ENCODE measurements at regions of chr20 and their contacts with region 1.

Region 1: DNA sequence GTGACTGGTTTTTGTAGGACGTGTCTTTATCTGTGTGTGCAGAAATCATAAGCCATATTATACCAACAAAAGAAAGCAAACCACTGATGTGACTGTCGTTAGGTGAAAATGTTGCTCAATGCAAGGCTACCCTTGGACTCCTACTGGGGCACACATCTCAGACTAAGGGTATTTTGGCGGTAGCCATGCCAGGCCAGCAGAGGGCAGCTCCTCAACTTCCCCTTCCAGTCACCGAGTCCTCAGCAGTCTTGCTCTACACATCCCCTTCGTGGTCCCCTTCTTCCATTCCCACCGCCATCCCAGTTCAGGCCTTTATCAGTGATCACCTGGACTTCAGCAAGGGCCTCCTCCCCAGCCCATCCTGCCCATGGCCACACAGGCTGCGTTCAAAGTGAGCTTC is 113.7 kb upstream of the GGTLC1 start:
- DNase-seq: peak; percentile 65
- ATAC-seq: peak; percentile 96
- H3K4me3 Mint-ChIP-seq: no peak overlapping the region
- H3K27ac Mint-ChIP-seq: no peak overlapping the region
- H3K4me1 Mint-ChIP-seq: no peaks in the 10 kb centered on the region
- H3K27me3 Mint-ChIP-seq: no peaks in the 10 kb centered on the region; the same call in 1 of the 2 replicates
- CTCF ChIP-seq: peak; percentile 37; the same call in 1 of the 2 replicates

Region 2: DNA sequence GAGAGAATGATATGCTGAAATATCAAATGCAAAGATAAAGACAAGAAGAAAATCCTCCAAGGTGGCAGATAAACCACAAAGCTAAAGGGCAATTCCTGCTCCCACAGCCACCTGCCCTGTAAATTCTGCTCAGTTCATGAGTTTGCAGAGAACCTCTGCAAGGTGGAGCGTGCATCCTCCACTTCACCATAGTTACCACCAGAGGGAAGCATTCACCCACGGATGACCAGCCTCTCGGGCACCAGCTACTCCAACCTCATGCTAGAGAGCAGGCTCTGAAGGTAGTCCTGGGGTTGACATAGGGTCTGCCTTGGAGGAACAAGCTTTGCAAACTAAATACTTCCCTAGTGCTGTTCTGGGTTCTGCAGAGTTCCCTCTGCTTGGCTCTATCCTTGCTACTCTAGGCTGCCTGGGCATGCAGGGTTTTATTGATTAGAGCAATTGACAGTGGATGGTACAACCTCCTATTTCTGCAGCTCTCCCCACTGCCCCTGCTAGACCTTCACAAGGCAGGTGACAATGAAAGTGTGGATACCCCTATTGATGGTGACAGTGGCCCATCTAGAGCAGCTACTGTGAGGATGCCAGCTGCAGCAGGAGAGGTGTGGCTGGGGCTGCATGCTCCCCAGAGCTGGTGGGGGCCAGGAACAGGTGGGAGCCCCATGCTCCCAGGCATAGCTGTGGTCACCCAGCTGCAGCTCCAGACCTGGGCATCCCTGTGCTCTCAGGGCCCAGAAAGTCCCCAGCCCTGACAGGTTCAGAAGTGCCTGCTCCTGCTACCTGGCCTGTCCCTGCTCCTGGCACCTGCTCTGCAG is 164.8 kb before region 1 on chr20:
- CTCF ChIA-PET with region 1: interaction called, 12 read pairs
- POLR2A ChIA-PET with region 1: no interaction called
- DNase-seq: peak; percentile 75
- ATAC-seq: peak; percentile 99
- H3K4me3 Mint-ChIP-seq: no peak overlapping the region
- H3K27ac Mint-ChIP-seq: no peak overlapping the region
- H3K4me1 Mint-ChIP-seq: no peaks in the 10 kb centered on the region
- H3K27me3 Mint-ChIP-seq: no peaks in the 10 kb centered on the region
- CTCF ChIP-seq: peak; percentile 71

Region 3: GRCh38 chr20:23954008-23954745 is 148.1 kb before region 1 on chr20:
- CTCF ChIA-PET with region 1: no interaction called
- POLR2A ChIA-PET with region 1: no interaction called
- DNase-seq: no peak
- ATAC-seq: no peak
- H3K4me3 Mint-ChIP-seq: no peak overlapping the region
- H3K27ac Mint-ChIP-seq: no peak overlapping the region
- H3K4me1 Mint-ChIP-seq: peaks cover 31% of the 10 kb centered on the region
- H3K27me3 Mint-ChIP-seq: no peaks in the 10 kb centered on the region
- CTCF ChIP-seq: no peak

Region 4: DNA sequence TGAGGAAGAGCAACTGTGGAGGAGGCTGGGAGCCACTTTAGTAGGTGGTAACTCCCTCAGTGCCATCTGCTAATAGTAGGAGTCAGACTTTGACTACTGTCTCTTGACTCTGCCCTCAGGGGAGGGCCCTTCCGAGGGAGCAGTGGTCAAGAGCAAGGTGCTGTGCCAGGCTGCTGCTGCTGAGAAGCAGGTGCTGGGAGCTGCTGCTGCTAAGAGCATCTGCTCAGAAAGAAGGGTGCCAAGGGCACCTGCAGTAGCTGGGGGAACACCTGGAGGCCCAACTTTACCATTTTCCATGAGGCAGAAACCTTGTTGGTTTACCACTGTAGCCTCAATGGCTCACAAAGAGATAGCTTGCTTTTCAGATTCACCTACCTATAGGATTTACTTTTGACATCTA is 132.2 kb before region 1 on chr20:
- CTCF ChIA-PET with region 1: no interaction called
- POLR2A ChIA-PET with region 1: no interaction called
- DNase-seq: no peak
- ATAC-seq: no peak
- H3K4me3 Mint-ChIP-seq: no peak overlapping the region
- H3K27ac Mint-ChIP-seq: no peak overlapping the region
- H3K4me1 Mint-ChIP-seq: peaks cover 21% of the 10 kb centered on the region
- H3K27me3 Mint-ChIP-seq: peaks cover 19% of the 10 kb centered on the region
- CTCF ChIP-seq: no peak

Region 5: GRCh38 chr20:24063100-24063499 is 39.2 kb before region 1 on chr20:
- CTCF ChIA-PET with region 1: no interaction called
- POLR2A ChIA-PET with region 1: no interaction called
- DNase-seq: no peak
- ATAC-seq: no peak
- H3K4me3 Mint-ChIP-seq: no peak overlapping the region
- H3K27ac Mint-ChIP-seq: no peak overlapping the region
- H3K4me1 Mint-ChIP-seq: peaks cover 21% of the 10 kb centered on the region
- H3K27me3 Mint-ChIP-seq: no peaks in the 10 kb centered on the region
- CTCF ChIP-seq: no peak

Region 6: DNA sequence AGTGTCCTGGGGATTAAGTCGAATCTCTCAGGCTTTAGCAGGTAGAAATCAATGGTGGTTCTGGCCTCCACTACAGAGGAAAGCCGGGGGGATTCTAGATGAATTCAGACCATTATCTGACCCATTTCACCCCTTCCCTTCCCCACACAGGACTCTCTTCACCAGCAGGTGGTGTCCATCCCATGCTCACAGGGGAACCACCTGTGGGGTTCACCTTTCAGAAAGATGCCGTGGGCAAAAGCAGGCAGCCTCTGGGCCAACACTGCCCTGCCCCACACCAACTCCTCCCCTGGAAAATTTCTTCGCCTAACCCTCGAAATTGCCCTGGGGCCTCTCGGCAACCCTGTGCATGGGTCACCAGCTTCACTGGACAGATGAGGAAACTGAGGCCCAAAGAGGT is 10.1 kb after region 1 on chr20:
- CTCF ChIA-PET with region 1: interaction called, 11 read pairs
- POLR2A ChIA-PET with region 1: no interaction called
- DNase-seq: no peak
- ATAC-seq: no peak
- H3K4me3 Mint-ChIP-seq: no peak overlapping the region
- H3K27ac Mint-ChIP-seq: no peak overlapping the region
- H3K4me1 Mint-ChIP-seq: no peaks in the 10 kb centered on the region
- H3K27me3 Mint-ChIP-seq: no peaks in the 10 kb centered on the region
- CTCF ChIP-seq: no peak

Measured in WTC11 (cell line).